ENCODE measurements at regions of chr12 and their contacts with region 1.

Region 1: DNA sequence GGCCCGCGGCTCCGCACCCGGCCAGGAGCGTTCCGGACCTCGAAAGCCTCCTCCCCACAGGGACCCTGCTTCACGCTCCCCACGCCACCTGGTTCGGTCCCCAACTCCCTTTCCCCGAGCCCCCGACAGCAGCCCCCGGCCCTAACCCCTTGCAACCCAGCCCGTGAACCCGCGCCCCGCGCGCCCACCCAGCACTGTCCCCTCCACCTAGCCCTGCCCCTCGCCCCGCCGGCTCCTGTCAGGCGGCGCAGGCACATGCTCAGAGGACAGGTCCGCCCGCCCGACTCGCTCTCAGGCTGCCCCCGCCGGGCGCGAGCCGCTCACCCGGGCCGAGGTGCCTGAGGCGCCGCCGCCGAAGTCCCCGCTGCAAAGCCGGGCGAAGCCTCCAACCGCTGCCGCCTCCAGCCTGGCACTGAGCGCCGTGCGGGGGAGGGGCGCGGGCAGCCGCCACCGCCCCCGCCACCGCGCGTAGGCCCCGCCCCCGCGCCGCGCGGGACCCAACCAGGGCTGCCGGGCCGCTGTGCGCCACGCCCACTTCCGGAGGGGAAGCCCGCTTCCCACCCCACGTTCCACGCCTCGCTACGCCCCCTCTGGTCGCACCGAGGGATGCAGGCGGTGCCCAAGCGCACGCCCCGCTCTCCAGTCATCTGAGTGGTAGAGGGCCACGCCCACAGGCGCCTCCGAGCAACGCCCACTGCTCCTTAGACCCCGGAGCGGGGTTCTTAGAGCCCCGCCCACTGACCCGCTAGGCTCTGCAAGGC is at the start of gene CORO1C:
- DNase-seq: peak; percentile 100
- H3K4me3 Mint-ChIP-seq: peak within 1 kb of the TSS; percentile 81
- H3K27ac Mint-ChIP-seq: peak within 1 kb of the TSS; percentile 97
- H3K4me1 Mint-ChIP-seq: peaks cover 50% of the 10 kb centered on the region
- H3K27me3 Mint-ChIP-seq: no peaks in the 10 kb centered on the region
- CTCF ChIP-seq: peak; percentile 88
- total RNA-seq, gene CORO1C: 252 and 270 TPM in 2 replicates

Region 2: DNA sequence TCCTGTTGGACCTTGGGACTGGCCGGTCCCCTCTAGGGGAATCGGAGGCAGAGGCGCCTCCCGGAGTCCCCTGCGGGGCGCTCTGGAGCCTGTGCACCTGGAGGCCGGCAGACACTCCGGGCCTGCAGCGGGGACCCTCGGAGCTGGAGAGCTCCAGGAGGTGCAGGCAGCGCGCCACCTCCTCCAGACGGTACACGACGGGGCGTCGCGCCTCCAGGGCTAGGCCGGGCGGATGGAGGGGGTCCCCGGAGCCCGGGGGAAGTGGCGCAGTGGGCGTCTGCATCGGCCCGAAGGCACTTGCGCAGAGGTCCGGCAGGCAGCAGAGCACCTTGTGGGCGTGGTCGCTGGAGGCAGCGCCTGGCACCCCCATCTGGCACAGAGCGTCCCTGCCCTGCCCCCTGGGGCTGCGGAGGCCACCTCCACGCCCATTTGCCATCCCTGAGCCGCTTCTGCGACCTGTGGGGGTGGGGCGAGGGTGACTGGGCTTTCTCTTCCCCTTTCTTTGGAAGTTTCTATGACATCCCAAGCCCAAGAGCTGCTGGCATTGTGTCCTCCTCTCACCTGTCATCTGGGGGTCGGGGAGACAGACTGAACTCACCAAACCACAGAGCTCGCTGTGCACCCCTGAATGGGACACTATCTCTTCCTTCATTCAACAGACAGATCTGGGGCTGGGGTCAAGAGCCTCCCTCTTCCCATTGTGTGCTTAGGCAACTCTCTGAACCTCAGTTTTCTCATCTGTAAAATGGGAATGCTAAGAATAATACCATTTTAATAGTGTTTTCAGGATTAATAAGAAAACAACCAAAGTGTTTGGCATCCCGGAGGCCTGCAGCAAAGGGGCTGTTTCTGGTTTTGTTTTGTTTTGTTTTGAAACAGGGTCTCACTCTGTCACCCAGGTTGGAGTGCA is 37.6 kb after region 1 on chr12:
- CTCF ChIA-PET with region 1: interaction called, 5 read pairs
- intact Hi-C with region 1: loop called (anchors 2 kb)
- DNase-seq: peak; percentile 88
- H3K4me3 Mint-ChIP-seq: peak overlapping the region; percentile 74
- H3K27ac Mint-ChIP-seq: no peak overlapping the region
- H3K4me1 Mint-ChIP-seq: peaks cover 7% of the 10 kb centered on the region
- H3K27me3 Mint-ChIP-seq: no peaks in the 10 kb centered on the region
- CTCF ChIP-seq: no peak

Region 3: DNA sequence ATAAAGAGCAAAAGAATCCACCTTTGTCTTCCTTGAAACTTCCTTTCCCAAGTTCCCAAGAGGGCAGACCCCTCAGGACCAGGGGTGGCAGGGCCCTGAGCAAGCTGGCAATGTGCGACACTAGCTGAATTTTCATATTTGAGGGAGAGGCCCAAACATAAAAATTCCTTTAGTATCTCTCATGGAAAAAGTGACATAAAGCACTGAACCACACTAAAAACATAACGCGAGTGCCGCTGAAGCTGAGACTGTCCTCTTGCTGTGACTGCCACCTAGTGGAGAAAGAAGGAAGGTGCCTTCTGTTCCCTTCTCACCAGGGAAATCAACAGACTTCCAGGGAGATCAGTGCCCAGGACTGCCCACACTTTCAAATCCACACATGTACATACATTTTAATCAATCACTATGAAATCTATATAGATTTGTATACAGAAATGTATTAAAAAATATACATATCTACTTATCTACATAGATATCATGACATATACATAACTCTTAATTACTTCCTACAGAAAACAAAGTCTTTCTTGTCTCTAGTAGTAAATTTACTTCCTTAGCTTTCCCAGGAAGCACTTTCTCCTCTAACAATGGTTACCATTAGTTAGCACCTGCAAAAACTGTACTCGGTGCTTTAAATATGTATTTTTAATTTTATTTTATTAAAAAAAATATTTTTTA is 72.3 kb after region 1 on chr12:
- CTCF ChIA-PET with region 1: no interaction called
- intact Hi-C with region 1: loop called (anchors 2 kb)
- DNase-seq: peak; percentile 78
- H3K4me3 Mint-ChIP-seq: no peak overlapping the region
- H3K27ac Mint-ChIP-seq: no peak overlapping the region
- H3K4me1 Mint-ChIP-seq: no peaks in the 10 kb centered on the region
- H3K27me3 Mint-ChIP-seq: no peaks in the 10 kb centered on the region
- CTCF ChIP-seq: peak; percentile 94

Region 4: DNA sequence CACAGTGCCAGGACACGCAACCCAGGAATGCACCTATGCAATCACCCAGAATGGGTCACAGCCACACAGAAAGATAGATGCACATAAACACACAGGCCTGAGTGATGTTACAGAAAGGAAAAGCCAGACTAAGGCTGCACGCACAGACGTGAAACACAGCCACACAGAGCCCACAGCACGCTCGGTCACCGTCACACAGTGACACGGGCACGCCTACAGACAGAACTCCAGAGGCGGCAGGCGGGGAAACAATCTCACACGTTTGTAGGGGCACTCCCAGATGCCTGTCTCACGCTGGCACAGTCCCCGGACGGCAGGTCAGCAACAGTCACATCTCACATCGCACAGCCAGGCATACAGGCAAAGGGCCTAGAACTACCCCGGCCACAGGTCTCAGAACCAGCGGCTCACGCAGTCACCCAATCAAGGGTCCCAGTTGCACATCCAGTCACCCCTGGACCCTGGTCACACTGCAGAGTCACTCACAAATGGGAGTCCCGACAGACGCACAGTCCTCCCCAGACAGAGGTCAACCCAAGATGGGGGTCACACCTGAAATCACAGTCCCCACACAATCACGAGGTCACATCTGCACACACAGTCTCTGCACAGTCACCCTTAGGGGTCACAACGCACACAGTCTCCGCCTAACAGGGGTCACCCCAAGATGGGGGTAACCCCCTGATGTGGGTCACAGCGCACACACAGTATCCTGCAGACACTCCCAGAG is 125.3 kb after region 1 on chr12:
- CTCF ChIA-PET with region 1: no interaction called
- intact Hi-C with region 1: loop called (anchors 5 kb)
- DNase-seq: peak; percentile 58
- H3K4me3 Mint-ChIP-seq: peak overlapping the region; percentile 81
- H3K27ac Mint-ChIP-seq: peak overlapping the region; percentile 33
- H3K4me1 Mint-ChIP-seq: peaks cover 41% of the 10 kb centered on the region
- H3K27me3 Mint-ChIP-seq: no peaks in the 10 kb centered on the region
- CTCF ChIP-seq: no peak

Measured in Calu3 (cell line).